Activated B cell treated with CpG ODN at 0.5 μM for 24 hours (primary cell): ENCODE measurements at regions of chr19 and their contacts with region 1.

Region 1: GRCh38 chr19:12333162-12334159 is at the start of gene ZNF563:
- DNase-seq: peak; percentile 93
- ATAC-seq: peak; percentile 86
- H3K4me3 Mint-ChIP-seq: peak within 1 kb of the TSS; percentile 96
- H3K27ac Mint-ChIP-seq: peak within 1 kb of the TSS; percentile 92
- H3K4me1 Mint-ChIP-seq: peaks cover 39% of the 10 kb centered on the region
- H3K27me3 Mint-ChIP-seq: no peaks in the 10 kb centered on the region
- CTCF ChIP-seq: no peak
- total RNA-seq, gene ZNF563: 3.6 and 3.7 TPM in 2 replicates

Region 2: DNA sequence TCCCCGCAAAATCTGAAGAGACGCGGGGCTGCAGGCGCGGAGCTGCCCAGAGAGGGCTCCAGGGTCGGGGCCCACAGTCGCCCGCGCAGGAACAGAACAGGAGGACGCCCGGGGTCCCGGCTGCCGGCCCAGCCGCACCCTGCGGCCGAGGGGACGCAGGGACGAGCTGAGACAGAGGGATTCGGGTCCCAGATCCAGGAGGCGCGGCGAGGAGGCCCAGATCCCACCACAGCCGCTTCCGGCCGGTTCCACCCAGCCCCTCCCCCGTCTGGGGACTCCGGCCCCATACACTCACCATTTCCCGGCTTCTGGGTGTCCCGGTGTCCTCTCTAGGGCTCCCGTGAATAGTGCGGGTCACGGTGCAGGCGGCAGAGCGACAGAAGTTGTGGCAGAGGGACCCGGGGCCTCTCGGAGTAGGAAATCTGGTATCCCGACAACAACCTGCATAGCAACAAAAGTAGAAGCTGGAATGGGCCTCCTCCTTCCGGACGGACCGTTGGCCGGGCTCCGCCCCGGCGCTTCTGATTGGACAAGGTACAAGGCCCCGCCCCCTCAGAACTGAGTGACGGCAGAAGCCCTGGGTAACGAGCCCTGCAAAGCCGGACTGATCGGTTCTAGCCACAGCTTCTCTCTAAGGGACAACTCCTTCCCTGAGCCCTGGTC is 193.4 kb before region 1 on chr19 and contains the start of gene ZNF20:
- CTCF ChIA-PET with region 1: no interaction called
- POLR2A ChIA-PET with region 1: interaction called, 12 read pairs
- intact Hi-C with region 1: no loop called
- DNase-seq: peak; percentile 85
- ATAC-seq: peak; percentile 96
- H3K4me3 Mint-ChIP-seq: peak within 1 kb of the TSS; percentile 97
- H3K27ac Mint-ChIP-seq: peak within 1 kb of the TSS; percentile 83
- H3K4me1 Mint-ChIP-seq: peaks cover 33% of the 10 kb centered on the region
- H3K27me3 Mint-ChIP-seq: no peaks in the 10 kb centered on the region
- CTCF ChIP-seq: no peak
- total RNA-seq, gene ZNF20: 4.2 and 8.5 TPM in 2 replicates

Region 3: GRCh38 chr19:12202250-12202649 is 131.2 kb before region 1 on chr19:
- CTCF ChIA-PET with region 1: no interaction called
- POLR2A ChIA-PET with region 1: no interaction called
- intact Hi-C with region 1: loop called (anchors 5 kb)
- DNase-seq: peak; percentile 33
- ATAC-seq: peak; percentile 71
- H3K4me3 Mint-ChIP-seq: no peak overlapping the region
- H3K27ac Mint-ChIP-seq: no peak overlapping the region
- H3K4me1 Mint-ChIP-seq: peaks cover 6% of the 10 kb centered on the region
- H3K27me3 Mint-ChIP-seq: no peaks in the 10 kb centered on the region
- CTCF ChIP-seq: no peak

Region 4: GRCh38 chr19:12346896-12347295 is 13.4 kb after region 1 on chr19:
- CTCF ChIA-PET with region 1: interaction called, 4 read pairs
- POLR2A ChIA-PET with region 1: no interaction called
- intact Hi-C with region 1: loop called (anchors 1 kb)
- DNase-seq: no peak
- ATAC-seq: peak; percentile 61
- H3K4me3 Mint-ChIP-seq: no peak overlapping the region
- H3K27ac Mint-ChIP-seq: no peak overlapping the region
- H3K4me1 Mint-ChIP-seq: no peaks in the 10 kb centered on the region
- H3K27me3 Mint-ChIP-seq: no peaks in the 10 kb centered on the region
- CTCF ChIP-seq: no peak

Region 5: DNA sequence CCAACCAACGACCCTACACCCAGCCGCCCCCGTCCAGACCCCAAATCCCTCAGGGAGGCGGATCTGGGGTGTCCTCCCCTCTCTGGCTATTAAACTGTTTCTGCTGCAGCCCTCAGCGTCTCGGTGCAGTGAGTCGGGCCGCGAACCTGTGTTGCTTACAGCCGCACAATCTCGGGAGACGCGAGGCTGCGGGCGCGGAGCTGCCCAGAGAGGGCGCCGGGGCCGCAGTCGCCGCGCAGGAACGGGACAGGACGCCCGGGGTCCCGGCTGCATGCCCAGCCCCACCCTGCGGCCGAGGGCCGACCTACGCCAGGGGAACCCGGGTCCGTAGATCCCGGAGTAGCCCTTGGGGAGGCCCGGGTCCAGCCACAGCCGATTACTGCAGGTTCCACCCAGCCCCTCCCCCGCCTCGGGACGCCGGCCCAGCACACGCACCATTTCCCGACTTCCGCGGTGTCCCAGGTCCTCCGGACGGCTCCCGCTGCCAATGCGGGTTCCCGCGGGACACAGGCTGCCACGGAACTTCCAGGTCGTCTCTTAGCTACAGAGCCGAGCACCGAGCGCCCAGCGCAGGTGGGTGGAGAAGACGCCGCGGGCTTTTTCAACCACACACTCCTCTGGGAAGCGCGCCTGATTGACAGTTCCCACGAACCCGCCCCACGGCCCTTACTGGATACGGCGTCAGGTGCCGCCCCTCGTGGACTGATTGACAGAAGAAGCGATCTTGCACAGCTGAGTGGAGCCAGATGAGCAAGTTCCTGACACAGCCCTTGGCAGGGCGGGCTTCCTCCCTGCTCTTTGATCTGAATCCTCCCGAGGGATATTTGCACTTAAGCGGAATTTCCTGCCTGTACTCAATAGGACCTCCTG is 67.4 kb after region 1 on chr19 and contains the start of gene ZNF799:
- CTCF ChIA-PET with region 1: no interaction called
- POLR2A ChIA-PET with region 1: interaction called, 8 read pairs
- intact Hi-C with region 1: loop called (anchors 1 kb)
- DNase-seq: peak; percentile 83
- ATAC-seq: peak; percentile 89
- H3K4me3 Mint-ChIP-seq: peak within 1 kb of the TSS; percentile 92
- H3K27ac Mint-ChIP-seq: peak within 1 kb of the TSS; percentile 77
- H3K4me1 Mint-ChIP-seq: peaks cover 22% of the 10 kb centered on the region
- H3K27me3 Mint-ChIP-seq: no peaks in the 10 kb centered on the region
- CTCF ChIP-seq: no peak
- total RNA-seq, gene ZNF799: 6.8 and 6.9 TPM in 2 replicates

Region 6: GRCh38 chr19:12478234-12478941 is 144.9 kb after region 1 on chr19:
- CTCF ChIA-PET with region 1: no interaction called
- POLR2A ChIA-PET with region 1: no interaction called
- intact Hi-C with region 1: no loop called
- DNase-seq: no peak
- ATAC-seq: no peak
- H3K4me3 Mint-ChIP-seq: no peak overlapping the region
- H3K27ac Mint-ChIP-seq: no peak overlapping the region
- H3K4me1 Mint-ChIP-seq: peaks cover 30% of the 10 kb centered on the region
- H3K27me3 Mint-ChIP-seq: no peaks in the 10 kb centered on the region
- CTCF ChIP-seq: no peak

Region 7: GRCh38 chr19:12551060-12551832 is 217.8 kb after region 1 on chr19 and contains the start of gene ZNF564:
- CTCF ChIA-PET with region 1: no interaction called
- POLR2A ChIA-PET with region 1: no interaction called
- intact Hi-C with region 1: loop called (anchors 5 kb)
- DNase-seq: peak; percentile 81
- ATAC-seq: peak; percentile 98
- H3K4me3 Mint-ChIP-seq: peak within 1 kb of the TSS; percentile 98
- H3K27ac Mint-ChIP-seq: peak within 1 kb of the TSS; percentile 94
- H3K4me1 Mint-ChIP-seq: peaks cover 48% of the 10 kb centered on the region
- H3K27me3 Mint-ChIP-seq: no peaks in the 10 kb centered on the region
- CTCF ChIP-seq: no peak
- total RNA-seq, gene ZNF564: 23.0 and 26.6 TPM in 2 replicates